ENCODE measurements at regions of chr6 and their contacts with region 1.

Region 1: GRCh38 chr6:3281631-3282475 is 23.1 kb downstream of the PSMG4 start:
- DNase-seq: peak in 1 of 3 donors; percentile 36
- ATAC-seq: peak in 3 of 4 donors; percentile 12 to 51 (median 35)
- H3K4me3 ChIP-seq: no peak overlapping the region
- H3K27ac ChIP-seq: peak overlapping the region in 2 of 3 donors; percentile 15 to 24
- H3K4me1 ChIP-seq: no peaks in the 10 kb centered on the region
- H3K27me3 ChIP-seq: no peaks in the 10 kb centered on the region
- CTCF ChIP-seq: no peak
- POLR2A ChIP-seq: no peak

Region 2: DNA sequence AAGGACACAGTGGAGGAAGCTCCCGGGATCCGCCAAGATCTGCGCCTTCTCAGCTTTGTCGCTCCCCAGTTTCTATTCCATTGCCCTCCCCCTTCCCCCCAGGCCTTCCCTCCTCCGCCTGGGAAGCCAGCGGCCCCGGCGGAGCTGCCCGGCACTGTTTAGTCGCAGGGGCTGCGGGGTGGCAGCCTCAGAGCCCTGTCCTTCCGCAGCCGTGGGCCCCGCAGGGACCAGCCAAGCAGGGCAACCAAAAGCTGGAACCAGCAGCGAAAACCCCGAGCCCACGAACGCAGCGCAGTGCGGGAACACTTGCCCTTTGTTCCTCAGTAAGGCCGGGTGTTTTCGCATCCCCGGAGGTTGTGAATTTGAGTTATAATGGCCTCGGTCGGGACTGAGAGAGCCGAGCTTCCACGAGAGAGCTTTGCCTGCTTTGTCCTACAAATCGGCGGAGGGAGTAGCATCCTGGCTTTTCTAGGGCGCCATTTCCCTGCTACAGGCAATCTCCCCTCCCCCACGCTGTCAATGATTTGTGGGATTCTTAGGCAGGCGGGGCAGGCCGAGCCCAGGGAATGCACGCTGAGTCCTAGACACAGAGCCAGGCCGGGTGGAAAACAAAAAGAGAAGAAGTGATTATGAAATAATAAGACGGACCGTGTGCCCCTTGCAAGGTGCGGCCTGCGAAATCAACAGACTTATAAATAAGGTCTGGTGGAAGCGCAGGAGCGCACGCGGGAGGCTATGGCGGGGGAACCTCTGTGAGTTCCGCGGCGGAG is 50.4 kb before region 1 on chr6:
- intact Hi-C with region 1: no loop called
- DNase-seq: peak; percentile 75 to 90 (median 79)
- ATAC-seq: peak; percentile 92 to 93 (median 92)
- H3K4me3 ChIP-seq: peak overlapping the region; percentile 65 to 71 (median 67)
- H3K27ac ChIP-seq: no peak overlapping the region
- H3K4me1 ChIP-seq: peaks cover 0 to 34% (median 5%) of the 10 kb centered on the region in 4 donors
- H3K27me3 ChIP-seq: peaks cover 0 to 18% of the 10 kb centered on the region in 2 donors
- CTCF ChIP-seq: no peak
- POLR2A ChIP-seq: peak; percentile 49

Region 3: GRCh38 chr6:3456755-3457466 is 175.1 kb after region 1 on chr6 and contains the start of gene SLC22A23:
- intact Hi-C with region 1: loop called in 1 of 2 experiments (anchors 5 kb)
- DNase-seq: peak; percentile 87 to 92 (median 89)
- ATAC-seq: peak; percentile 80 to 88 (median 83)
- H3K4me3 ChIP-seq: peak within 1 kb of the TSS; percentile 66 to 73 (median 69)
- H3K27ac ChIP-seq: peak within 1 kb of the TSS; percentile 27 to 82 (median 44)
- H3K4me1 ChIP-seq: peaks cover 0 to 29% (median 0%) of the 10 kb centered on the region in 4 donors
- H3K27me3 ChIP-seq: no peaks in the 10 kb centered on the region
- CTCF ChIP-seq: peak; percentile 65 to 78 (median 67)
- POLR2A ChIP-seq: peak; percentile 66
- total RNA-seq, gene SLC22A23: 11.7 to 27.6 (median 16.3) TPM

Region 4: GRCh38 chr6:3724451-3725108 is 442.7 kb after region 1 on chr6:
- intact Hi-C with region 1: loop called in 1 of 2 experiments (anchors 5 kb)
- DNase-seq: no peak
- ATAC-seq: peak in 2 of 4 donors; percentile 7 to 12
- H3K4me3 ChIP-seq: no peak overlapping the region
- H3K27ac ChIP-seq: no peak overlapping the region
- H3K4me1 ChIP-seq: no peaks in the 10 kb centered on the region
- H3K27me3 ChIP-seq: no peaks in the 10 kb centered on the region
- CTCF ChIP-seq: no peak
- POLR2A ChIP-seq: no peak

Region 5: DNA sequence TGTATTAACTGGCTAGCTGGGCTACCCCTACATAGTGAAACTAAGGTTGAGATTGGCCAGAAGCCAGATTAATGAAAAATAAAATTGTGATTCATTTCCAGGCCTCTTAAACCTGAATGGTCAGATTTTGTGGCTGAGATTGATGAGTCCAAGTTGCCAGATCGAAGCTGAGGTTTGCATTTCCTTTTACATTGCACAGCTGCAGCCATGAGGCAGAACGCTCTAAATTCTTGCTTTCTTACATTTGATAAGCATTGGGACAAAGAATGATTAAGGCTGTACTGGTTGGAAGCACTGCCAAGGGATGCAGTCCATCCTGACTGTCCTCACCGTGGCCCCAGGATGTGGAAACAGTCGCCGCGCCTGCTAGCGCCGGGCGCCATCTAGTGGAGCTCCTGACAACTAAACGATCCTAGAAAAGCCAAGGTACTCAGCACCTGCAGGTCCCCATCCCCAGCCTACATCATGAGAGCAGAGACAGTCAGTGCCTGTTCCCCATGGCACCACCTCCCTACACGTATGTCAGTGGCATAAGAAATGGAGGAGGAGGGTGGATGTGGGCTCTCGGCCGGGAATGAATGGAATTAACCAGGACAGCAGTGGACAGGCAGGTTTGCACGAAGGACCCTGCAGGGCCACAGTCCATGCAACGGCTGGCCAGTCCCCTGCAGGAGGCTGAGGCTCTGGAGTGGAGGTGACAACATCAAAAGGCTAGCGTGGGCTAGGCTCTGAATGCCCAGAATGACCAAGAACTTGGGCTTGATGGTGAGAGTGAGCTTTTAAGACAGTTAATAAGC is 450.7 kb after region 1 on chr6:
- intact Hi-C with region 1: loop called (anchors 5 kb)
- DNase-seq: peak; percentile 80 to 81 (median 81)
- ATAC-seq: peak; percentile 87 to 91 (median 90)
- H3K4me3 ChIP-seq: no peak overlapping the region
- H3K27ac ChIP-seq: no peak overlapping the region
- H3K4me1 ChIP-seq: peaks cover 0 to 13% (median 0%) of the 10 kb centered on the region in 4 donors
- H3K27me3 ChIP-seq: no peaks in the 10 kb centered on the region
- CTCF ChIP-seq: peak; percentile 76 to 94 (median 87)
- POLR2A ChIP-seq: no peak

Region 6: DNA sequence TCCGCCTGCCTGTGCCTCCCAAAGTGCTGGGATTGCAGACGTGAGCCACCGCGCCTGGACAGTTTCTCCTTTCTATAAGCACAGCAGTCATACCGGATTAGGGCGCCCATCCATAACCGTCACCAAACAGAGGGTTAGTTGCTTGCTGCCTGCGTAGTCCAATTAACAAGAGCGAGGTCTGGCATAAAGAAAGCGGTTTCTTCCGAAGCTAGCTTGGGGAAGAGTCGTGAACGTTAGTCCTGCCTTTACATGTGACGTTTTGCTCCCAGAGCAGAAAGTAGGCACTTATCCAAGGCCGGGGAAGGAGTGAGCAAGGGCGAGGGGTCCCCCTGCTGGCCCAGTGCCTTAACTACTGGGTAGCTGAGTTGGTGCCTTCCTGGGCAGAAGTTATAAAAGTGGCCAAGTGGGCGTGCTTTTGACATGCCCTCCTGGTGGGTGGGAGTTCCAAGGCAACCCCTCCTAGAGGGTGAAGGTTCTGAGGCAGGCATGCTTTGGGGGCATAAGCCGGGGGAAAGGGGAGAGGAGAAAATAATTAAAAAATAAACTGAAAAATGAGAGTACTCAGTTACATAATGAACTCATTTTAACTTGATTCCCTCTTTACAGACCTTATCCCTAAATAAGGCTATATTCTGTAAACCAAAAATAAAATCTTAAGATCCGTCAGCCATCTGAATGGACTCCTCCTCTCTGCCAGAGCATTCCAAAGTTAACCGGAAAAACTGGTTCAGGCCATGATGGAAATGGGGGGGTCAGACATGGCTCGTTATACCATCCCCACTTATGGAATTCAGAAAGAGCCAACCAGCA is 709.0 kb after region 1 on chr6:
- intact Hi-C with region 1: no loop called
- DNase-seq: peak; percentile 84 to 91 (median 87)
- ATAC-seq: peak; percentile 98 to 99 (median 98)
- H3K4me3 ChIP-seq: peak overlapping the region; percentile 35 to 39 (median 36)
- H3K27ac ChIP-seq: peak overlapping the region; percentile 40 to 61 (median 47)
- H3K4me1 ChIP-seq: peaks cover 0 to 10% (median 4%) of the 10 kb centered on the region in 4 donors
- H3K27me3 ChIP-seq: no peaks in the 10 kb centered on the region
- CTCF ChIP-seq: peak; percentile 79 to 83 (median 81)
- POLR2A ChIP-seq: no peak